ENCODE measurements at regions of chr11 and their contacts with region 1.

Region 1: GRCh38 chr11:113289431-113290187 is 24.8 kb upstream of the TTC12 start:
- DNase-seq: peak; percentile 71
- ATAC-seq: peak; percentile 84
- H3K4me3 Mint-ChIP-seq: no peak overlapping the region
- H3K27ac Mint-ChIP-seq: no peak overlapping the region
- H3K4me1 Mint-ChIP-seq: no peaks in the 10 kb centered on the region
- H3K27me3 Mint-ChIP-seq: peaks cover 7% of the 10 kb centered on the region

Region 2: DNA sequence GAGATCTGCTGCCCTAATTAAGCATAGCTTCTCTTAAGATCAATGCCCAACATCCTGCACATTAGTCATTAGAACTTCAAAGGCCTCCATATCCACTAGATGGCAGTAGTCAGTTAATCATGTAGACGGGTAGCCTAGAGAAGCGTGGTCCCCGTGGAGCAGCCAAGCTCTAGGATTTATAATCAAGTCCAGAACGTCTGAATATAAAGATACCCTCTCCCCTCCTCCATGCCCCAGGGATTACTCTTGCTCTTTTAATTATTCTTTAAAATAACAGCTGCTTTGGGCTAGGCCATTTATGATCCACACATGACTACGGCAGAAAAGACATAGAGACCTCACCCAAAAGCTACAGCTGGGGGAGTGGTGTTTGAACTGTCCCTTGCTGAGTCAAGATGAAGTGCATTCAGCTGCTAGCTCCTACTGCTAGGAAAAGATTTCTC is 701.3 kb before region 1 on chr11:
- CTCF ChIA-PET with region 1: interaction called, 64 read pairs
- DNase-seq: peak; percentile 57
- ATAC-seq: peak; percentile 87
- H3K4me3 Mint-ChIP-seq: no peak overlapping the region
- H3K27ac Mint-ChIP-seq: no peak overlapping the region
- H3K4me1 Mint-ChIP-seq: peaks cover 3% of the 10 kb centered on the region
- H3K27me3 Mint-ChIP-seq: peaks cover 14% of the 10 kb centered on the region

Region 3: DNA sequence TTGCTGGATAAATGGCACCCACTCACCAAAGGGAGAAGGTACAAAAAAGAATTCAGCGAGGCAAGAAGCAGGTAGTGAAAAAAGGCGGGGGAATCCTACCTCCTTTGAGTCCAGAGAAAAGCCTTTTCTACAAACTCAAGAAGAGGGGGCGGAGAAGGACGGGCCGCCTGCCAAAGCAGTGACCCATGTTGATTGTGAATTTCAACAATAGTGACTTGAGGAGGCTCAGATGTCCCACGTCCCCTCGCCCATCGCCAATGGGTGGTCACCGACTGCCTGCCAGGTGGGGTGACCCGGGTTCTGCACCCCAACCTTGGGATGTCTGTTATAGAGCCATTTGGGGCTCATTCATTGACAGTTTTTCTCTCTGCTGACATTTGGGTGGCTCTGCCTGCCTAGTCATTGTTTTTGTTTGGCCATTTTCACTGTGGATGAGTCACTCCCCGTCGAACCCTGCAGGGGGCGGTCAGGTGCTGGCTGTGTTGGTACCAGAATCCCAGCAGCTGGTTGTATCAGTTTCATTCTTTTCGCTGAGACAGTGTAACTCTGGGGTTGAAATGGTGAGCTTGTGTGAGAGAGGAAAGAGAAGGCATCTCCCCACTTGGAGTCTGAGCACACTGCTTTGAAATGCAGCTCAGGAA is 491.8 kb before region 1 on chr11:
- CTCF ChIA-PET with region 1: interaction called, 14 read pairs
- DNase-seq: peak; percentile 74
- ATAC-seq: peak; percentile 86
- H3K4me3 Mint-ChIP-seq: peak overlapping the region; percentile 59
- H3K27ac Mint-ChIP-seq: no peak overlapping the region
- H3K4me1 Mint-ChIP-seq: peaks cover 9% of the 10 kb centered on the region
- H3K27me3 Mint-ChIP-seq: peaks cover 8% of the 10 kb centered on the region

Region 4: GRCh38 chr11:112837162-112837826 is 452.3 kb before region 1 on chr11:
- CTCF ChIA-PET with region 1: interaction called, 10 read pairs
- DNase-seq: no peak
- ATAC-seq: no peak
- H3K4me3 Mint-ChIP-seq: no peak overlapping the region
- H3K27ac Mint-ChIP-seq: no peak overlapping the region
- H3K4me1 Mint-ChIP-seq: no peaks in the 10 kb centered on the region
- H3K27me3 Mint-ChIP-seq: peaks cover 11% of the 10 kb centered on the region

Region 5: DNA sequence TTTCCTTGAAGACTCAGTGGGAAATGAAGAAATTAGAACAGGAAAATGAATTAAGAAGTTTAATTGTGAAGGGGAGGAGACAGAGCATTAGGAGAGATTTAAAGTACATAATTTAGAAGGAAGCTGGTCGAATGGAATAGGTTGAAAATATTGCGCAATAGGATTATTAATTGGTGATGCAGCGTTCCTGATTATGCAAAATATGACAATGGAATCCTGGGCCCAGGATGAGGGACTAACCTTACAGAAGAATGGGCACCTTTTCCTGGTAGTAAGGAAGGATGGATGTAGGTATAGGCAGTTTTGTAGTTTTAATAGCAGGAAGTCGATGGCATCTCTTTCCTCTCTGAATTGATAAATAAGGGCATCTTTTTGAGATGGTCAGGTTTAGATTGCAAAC is 32.5 kb after region 1 on chr11:
- CTCF ChIA-PET with region 1: no interaction called
- DNase-seq: no peak
- ATAC-seq: no peak
- H3K4me3 Mint-ChIP-seq: no peak overlapping the region
- H3K27ac Mint-ChIP-seq: no peak overlapping the region
- H3K4me1 Mint-ChIP-seq: no peaks in the 10 kb centered on the region
- H3K27me3 Mint-ChIP-seq: no peaks in the 10 kb centered on the region

Region 6: DNA sequence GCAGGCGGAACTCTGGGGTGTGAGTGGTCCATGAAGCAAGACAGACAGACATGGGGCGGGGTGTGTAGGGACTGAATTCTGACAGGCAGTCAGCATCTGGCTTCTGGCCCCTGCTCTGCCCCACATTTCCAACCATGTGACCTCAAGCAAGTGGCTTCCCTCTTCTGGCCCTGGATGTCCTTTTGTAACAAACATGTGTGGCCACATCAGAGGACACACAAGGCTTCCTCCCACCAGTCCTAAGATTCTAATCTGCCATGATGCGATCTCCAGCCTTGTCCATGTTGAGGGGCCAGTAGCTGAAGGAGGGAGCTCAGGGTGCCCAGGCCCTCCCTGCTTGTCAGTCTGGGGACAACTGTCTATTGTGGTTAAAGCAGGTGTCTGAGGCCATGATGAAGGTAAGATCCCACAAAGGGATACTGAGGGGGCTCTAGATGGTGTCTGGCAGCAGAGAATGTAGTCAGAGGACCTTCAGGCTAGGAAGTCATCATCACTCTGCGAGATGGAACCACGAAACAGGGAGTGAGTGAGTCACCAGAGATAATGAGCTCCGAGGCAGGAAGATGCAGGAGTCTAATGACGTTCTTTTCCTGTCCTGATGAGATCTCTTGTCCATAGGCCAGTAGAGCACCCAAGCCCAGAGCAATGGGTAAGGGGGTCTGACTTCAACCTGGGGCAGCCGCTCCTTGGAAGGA is 158.2 kb after region 1 on chr11:
- CTCF ChIA-PET with region 1: no interaction called
- DNase-seq: peak; percentile 55
- ATAC-seq: peak; percentile 62
- H3K4me3 Mint-ChIP-seq: no peak overlapping the region
- H3K27ac Mint-ChIP-seq: peak overlapping the region; percentile 52
- H3K4me1 Mint-ChIP-seq: peaks cover 40% of the 10 kb centered on the region
- H3K27me3 Mint-ChIP-seq: peaks cover 18% of the 10 kb centered on the region

Measured in activated CD8-positive, alpha-beta memory T cell treated with anti-CD3 and anti-CD28 coated beads, Interleukin-2, amount 10 ng/mL, durations not matched to agents 7 days and 5 days (primary cell).